Activated naive CD4-positive, alpha-beta T cell treated with anti-CD3 and anti-CD28 coated beads for 36 hours (primary cell): ENCODE measurements at regions of chr4 and their contacts with region 1.

Region 1: GRCh38 chr4:88591787-88592599 is at the start of gene HERC3:
- DNase-seq: peak; percentile 90
- H3K4me3 Mint-ChIP-seq: peak within 1 kb of the TSS; percentile 98
- H3K27ac Mint-ChIP-seq: peak within 1 kb of the TSS; percentile 83
- H3K4me1 Mint-ChIP-seq: peaks cover 41% of the 10 kb centered on the region
- H3K27me3 Mint-ChIP-seq: no peaks in the 10 kb centered on the region
- total RNA-seq, gene HERC3: 24.4 to 25.8 TPM

Region 2: GRCh38 chr4:88456757-88457306 is 135.2 kb before region 1 on chr4 and contains the start of gene HERC5:
- CTCF ChIA-PET with region 1: no interaction called
- intact Hi-C with region 1: loop called (anchors 1 kb)
- DNase-seq: peak; percentile 93
- H3K4me3 Mint-ChIP-seq: peak within 1 kb of the TSS; percentile 98
- H3K27ac Mint-ChIP-seq: peak within 1 kb of the TSS; percentile 97
- H3K4me1 Mint-ChIP-seq: peaks cover 5% of the 10 kb centered on the region
- H3K27me3 Mint-ChIP-seq: no peaks in the 10 kb centered on the region
- total RNA-seq, gene HERC5: 38.8 to 39.5 TPM

Region 3: DNA sequence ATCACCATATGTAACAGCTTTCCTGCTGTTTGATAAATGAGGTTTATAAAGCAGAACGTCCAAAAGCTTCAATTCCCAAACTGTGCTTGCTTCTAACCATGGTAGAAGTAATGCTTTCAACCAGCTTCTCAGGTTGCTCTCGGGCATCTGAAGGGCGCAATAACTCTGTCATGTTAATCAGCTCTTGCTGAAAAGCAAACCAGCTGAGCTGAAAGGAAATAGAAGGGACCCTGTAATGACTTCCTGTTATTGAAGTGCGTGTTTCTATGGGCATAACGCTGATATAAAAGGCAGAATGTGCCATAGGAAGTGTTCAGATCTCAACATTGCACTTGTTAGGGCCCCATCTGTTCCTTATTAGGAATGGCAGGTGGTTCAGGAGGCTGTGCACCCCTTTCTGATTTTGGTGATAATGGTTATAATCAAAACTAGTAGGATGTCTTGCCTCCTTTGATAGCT is 21.5 kb after region 1 on chr4:
- CTCF ChIA-PET with region 1: interaction called, 11 read pairs
- intact Hi-C with region 1: loop called (anchors 1 kb)
- DNase-seq: peak; percentile 62
- H3K4me3 Mint-ChIP-seq: peak overlapping the region; percentile 64
- H3K27ac Mint-ChIP-seq: peak overlapping the region; percentile 92
- H3K4me1 Mint-ChIP-seq: peaks cover 82% of the 10 kb centered on the region
- H3K27me3 Mint-ChIP-seq: no peaks in the 10 kb centered on the region

Region 4: GRCh38 chr4:88659055-88659889 is 67.3 kb after region 1 on chr4:
- CTCF ChIA-PET with region 1: interaction called, 6 read pairs
- intact Hi-C with region 1: loop called (anchors 1 kb)
- DNase-seq: peak; percentile 69
- H3K4me3 Mint-ChIP-seq: no peak overlapping the region
- H3K27ac Mint-ChIP-seq: no peak overlapping the region
- H3K4me1 Mint-ChIP-seq: peaks cover 6% of the 10 kb centered on the region
- H3K27me3 Mint-ChIP-seq: no peaks in the 10 kb centered on the region

Region 5: DNA sequence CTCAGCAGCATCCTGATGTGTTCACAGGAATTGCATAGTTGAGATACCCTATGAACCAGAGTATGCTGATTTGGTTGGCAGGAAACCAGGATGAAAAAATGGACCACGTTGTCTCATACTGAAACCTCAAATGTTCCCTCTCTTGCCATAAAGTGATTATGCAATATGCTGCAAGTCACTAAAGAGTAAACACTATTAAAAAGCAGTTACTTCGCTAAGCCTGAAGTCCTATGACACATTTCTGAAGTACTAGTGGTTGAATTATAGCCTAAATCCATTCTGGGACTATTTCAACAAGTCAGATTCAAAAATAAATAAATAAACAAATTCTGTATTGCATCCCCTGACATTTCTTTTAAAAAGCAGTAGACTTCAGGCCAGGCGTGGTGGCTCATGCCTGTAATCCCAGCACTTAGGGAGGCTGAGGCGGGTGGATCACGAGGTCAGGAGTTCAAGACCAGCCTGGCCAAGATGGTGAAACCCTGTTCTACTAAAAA is 211.7 kb after region 1 on chr4:
- CTCF ChIA-PET with region 1: no interaction called
- intact Hi-C with region 1: loop called (anchors 5 kb)
- DNase-seq: peak; percentile 60
- H3K4me3 Mint-ChIP-seq: no peak overlapping the region
- H3K27ac Mint-ChIP-seq: no peak overlapping the region
- H3K4me1 Mint-ChIP-seq: peaks cover 22% of the 10 kb centered on the region
- H3K27me3 Mint-ChIP-seq: no peaks in the 10 kb centered on the region